ENCODE measurements at regions of chr13 and their contacts with region 1.

Region 1: GRCh38 chr13:24254146-24254841 is 55.1 kb upstream of the C1QTNF9 start:
- DNase-seq: peak; percentile 86
- H3K4me3 Mint-ChIP-seq: peak overlapping the region; percentile 87
- H3K27ac Mint-ChIP-seq: peak overlapping the region; percentile 95
- H3K4me1 Mint-ChIP-seq: peaks cover 73% of the 10 kb centered on the region
- H3K27me3 Mint-ChIP-seq: no peaks in the 10 kb centered on the region

Region 2: GRCh38 chr13:24264976-24265375 is 10.7 kb after region 1 on chr13:
- CTCF ChIA-PET with region 1: interaction called, 23 read pairs
- POLR2A ChIA-PET with region 1: interaction called, 131 read pairs
- intact Hi-C with region 1: loop called (anchors 1 kb)
- DNase-seq: peak; percentile 93
- H3K4me3 Mint-ChIP-seq: peak overlapping the region; percentile 67
- H3K27ac Mint-ChIP-seq: peak overlapping the region; percentile 95
- H3K4me1 Mint-ChIP-seq: peaks cover 90% of the 10 kb centered on the region
- H3K27me3 Mint-ChIP-seq: no peaks in the 10 kb centered on the region

Measured in activated CD4-positive, alpha-beta memory T cell treated with anti-CD3 and anti-CD28 coated beads for 36 hours (primary cell).